ENCODE measurements at regions of chr5 and their contacts with region 1.

Region 1: DNA sequence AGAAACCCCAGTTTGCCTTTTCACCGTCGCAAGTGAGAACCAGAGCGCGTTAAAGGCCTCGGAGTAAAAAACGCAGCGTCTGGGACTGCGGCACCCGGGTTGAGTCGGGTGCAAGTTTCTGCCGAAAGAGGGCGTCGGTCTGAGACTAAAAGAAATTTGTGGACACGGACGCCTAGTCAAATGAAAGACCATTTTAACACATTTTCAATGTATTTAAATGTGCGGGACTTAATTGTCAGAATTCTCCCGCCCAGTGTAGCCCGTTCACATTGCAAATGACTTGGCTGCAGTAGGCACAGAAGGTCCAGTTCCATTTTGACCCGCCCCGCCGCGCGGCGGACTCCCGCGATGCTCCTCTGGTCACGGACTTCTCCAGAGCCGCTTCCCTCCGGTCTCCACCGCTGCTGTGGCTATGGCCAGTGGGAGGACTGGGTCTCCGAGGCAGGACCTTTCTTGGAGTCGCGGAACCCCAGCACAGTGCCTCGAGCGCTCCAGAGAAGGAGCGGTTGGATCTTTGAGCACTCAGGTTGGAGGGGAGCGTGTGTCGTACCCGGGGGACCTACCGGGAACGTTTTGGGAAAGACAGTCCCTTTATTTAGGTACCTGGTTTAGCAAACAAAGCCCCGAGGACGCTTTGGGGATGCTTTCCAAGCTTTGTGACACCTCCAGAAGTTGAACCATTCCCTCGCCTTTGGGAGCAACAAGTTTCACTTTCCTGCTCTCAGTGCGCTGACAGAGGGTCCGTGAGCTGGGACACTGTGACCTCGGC is 1.2 kb upstream of the NPR3 start:
- DNase-seq: peak; percentile 59 to 84 (median 75)
- ATAC-seq: peak; percentile 75
- H3K4me3 ChIP-seq: peak overlapping the region; percentile 56 to 62
- H3K27ac ChIP-seq: peak overlapping the region; percentile 59 to 68
- H3K4me1 ChIP-seq: peaks cover 12 to 55% of the 10 kb centered on the region in 2 donors
- H3K27me3 ChIP-seq: peaks cover 18 to 67% of the 10 kb centered on the region in 2 donors
- CTCF ChIP-seq: peak; percentile 50 to 71

Region 2: DNA sequence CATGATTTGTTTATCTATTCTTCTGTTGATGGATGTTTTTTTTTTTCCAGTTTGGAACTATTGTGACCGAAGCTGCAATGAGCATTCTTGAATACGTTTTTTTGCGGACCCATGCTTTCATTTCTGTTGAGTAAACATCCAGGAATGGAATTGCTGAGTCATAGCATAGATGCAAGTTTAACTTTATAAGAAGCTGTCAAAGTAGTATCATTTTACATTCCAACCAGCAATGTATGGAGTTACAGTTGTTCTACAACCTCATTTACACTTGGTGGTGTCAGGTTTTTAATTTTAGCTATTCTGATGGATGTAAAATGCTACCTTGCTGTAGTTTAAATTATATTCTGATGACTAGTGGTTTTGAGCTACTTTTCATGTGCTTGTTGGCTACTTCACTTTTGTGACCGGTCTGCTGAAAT is 50.1 kb after region 1 on chr5:
- intact Hi-C with region 1: no loop called
- DNase-seq: no peak
- ATAC-seq: no peak
- H3K4me3 ChIP-seq: peak overlapping the region in 1 of 2 donors; percentile 5
- H3K27ac ChIP-seq: peak overlapping the region; percentile 28 to 35
- H3K4me1 ChIP-seq: peaks cover 0 to 8% of the 10 kb centered on the region in 2 donors
- H3K27me3 ChIP-seq: no peaks in the 10 kb centered on the region
- CTCF ChIP-seq: no peak

Region 3: DNA sequence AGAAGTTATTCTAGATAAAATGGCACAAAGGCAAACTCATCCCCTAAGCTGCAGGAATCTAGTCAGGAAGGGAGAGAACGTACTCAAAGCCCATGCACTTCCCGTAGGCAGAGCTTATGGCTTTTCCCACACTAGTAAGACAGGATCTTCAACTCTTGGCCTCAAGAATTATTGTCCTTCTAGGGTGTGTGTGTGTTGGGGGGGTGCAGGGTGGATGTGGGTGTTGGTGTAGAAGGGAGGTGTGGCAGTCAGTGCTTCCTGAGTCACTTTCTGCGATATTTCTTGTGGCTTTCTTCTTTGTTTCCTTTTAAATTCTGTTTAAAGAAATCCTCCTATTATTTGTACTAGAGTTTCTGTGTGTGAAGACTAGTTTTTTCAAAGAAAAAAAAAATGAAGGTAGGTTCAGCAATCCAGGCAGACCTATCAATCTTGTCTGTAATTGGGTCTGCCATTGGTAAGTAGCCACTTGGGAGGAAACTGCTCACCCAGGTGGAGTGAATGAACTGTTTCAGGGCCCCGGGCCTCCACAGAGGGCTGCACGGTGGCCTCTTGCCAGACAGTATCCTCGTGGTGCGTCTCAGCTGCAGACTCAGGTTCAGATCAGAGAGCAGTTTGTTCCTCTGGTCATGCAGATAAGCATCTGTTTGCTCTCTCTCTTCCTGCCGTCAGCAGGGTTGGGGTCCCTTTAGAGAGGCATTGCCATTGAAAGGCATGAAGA is 133.0 kb after region 1 on chr5:
- intact Hi-C with region 1: loop called in 1 of 2 experiments (anchors 10 kb)
- DNase-seq: peak in 2 of 4 donors; percentile 24 to 45
- ATAC-seq: peak; percentile 71
- H3K4me3 ChIP-seq: no peak overlapping the region
- H3K27ac ChIP-seq: peak overlapping the region in 1 of 2 donors; percentile 38
- H3K4me1 ChIP-seq: peaks cover 0 to under 1% of the 10 kb centered on the region in 2 donors
- H3K27me3 ChIP-seq: no peaks in the 10 kb centered on the region
- CTCF ChIP-seq: no peak

Region 4: GRCh38 chr5:33423018-33423630 is 713.2 kb after region 1 on chr5:
- intact Hi-C with region 1: loop called in 1 of 2 experiments (anchors 10 kb)
- DNase-seq: peak in 2 of 4 donors; percentile 26 to 51
- ATAC-seq: peak; percentile 52
- H3K4me3 ChIP-seq: no peak overlapping the region
- H3K27ac ChIP-seq: no peak overlapping the region
- H3K4me1 ChIP-seq: no peaks in the 10 kb centered on the region
- H3K27me3 ChIP-seq: no peaks in the 10 kb centered on the region
- CTCF ChIP-seq: peak in 1 of 2 donors; percentile 23

Region 5: DNA sequence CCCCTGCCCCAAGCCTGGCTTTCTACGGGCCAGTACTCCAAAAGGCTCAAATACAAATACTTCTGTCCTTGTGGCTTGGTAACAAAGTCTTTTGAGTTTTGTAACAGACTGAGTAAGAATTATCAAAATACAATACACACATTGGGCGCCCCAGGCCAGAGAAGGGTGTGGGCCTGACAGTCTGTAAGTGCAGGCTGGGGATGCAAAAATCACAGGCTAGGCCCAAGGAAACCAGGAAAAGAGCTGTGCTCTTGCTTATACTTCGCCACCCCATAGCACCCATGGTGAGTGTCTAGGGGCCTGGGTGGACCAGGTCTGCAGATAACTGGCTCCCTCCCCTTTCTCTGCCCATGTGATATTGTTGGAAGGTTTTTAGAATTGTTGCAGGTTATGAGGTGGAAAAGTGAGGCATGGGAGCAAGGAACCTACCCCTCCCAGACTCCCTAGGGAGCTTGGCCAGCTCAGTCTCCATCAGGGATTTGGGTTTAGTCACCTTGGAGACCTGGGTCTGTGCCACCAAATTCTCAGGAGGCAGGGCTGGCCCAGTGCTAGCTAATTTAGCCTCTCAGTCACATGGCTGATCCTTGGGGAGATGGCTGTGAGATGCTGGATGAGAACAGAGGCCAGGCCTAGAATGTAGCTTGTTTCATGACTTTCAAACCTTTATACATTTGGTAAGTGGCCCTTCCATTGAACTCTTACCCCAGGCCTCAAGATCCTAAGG is 803.7 kb after region 1 on chr5:
- intact Hi-C with region 1: no loop called
- DNase-seq: no peak
- ATAC-seq: no peak
- H3K4me3 ChIP-seq: no peak overlapping the region
- H3K27ac ChIP-seq: no peak overlapping the region
- H3K4me1 ChIP-seq: no peaks in the 10 kb centered on the region
- H3K27me3 ChIP-seq: no peaks in the 10 kb centered on the region
- CTCF ChIP-seq: no peak

Measured in left lung (tissue), 14 donors.